ENCODE measurements at regions of chr4 and their contacts with region 1.

Region 1: DNA sequence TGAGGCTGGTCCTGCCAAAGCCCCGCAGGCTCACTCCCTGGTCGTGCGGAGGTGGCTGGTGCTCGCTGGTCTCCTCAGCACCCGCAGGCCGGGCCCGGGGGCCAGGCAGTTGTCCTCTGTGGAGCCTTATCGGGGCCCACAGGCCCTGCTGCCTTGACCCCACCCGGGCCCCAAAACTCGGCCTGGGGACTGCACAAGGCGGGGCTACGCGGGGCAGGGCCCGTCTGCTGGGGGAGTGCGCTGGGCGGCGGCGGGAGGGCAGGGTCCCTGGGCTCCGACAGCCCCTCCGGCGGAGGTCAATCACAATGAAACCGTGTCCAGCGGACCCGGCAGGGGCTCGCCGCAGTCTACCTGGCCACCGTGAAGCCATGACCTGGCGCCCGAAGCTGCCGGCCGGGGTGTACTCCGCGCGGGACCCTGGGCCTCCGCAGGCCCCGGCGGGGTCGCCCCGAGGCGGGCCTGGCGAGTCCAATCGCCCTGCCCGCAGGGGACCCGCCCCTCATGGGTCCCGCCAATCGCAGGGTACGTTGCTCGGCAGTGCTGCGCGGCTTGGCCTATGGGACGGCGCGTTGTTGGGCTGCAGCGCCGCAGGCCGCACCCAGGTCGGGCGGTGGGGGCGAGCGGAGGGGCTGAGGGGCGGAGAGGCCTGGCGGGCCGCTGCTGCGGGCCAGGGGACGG is at the start of gene ADD1:
- DNase-seq: peak; percentile 76 to 98
- H3K4me3 ChIP-seq: peak within 1 kb of the TSS; percentile 87
- H3K27ac ChIP-seq: no peak within 1 kb of the TSS
- H3K4me1 ChIP-seq: peaks cover 9% of the 10 kb centered on the region; the same call in 1 of the 2 replicates
- H3K27me3 ChIP-seq: no peaks in the 10 kb centered on the region
- CTCF ChIP-seq: no peak
- total RNA-seq, gene ADD1: 178 and 181 TPM in 2 replicates

Region 2: GRCh38 chr4:2761035-2761923 is 82.1 kb before region 1 on chr4:
- CTCF ChIA-PET with region 1: no interaction called
- POLR2A ChIA-PET with region 1: no interaction called
- intact Hi-C with region 1: loop called (anchors 5 kb)
- DNase-seq: peak in 1 of 2 experiments; percentile 57
- H3K4me3 ChIP-seq: no peak overlapping the region
- H3K27ac ChIP-seq: no peak overlapping the region
- H3K4me1 ChIP-seq: no peaks in the 10 kb centered on the region
- H3K27me3 ChIP-seq: no peaks in the 10 kb centered on the region
- CTCF ChIP-seq: no peak

Region 3: DNA sequence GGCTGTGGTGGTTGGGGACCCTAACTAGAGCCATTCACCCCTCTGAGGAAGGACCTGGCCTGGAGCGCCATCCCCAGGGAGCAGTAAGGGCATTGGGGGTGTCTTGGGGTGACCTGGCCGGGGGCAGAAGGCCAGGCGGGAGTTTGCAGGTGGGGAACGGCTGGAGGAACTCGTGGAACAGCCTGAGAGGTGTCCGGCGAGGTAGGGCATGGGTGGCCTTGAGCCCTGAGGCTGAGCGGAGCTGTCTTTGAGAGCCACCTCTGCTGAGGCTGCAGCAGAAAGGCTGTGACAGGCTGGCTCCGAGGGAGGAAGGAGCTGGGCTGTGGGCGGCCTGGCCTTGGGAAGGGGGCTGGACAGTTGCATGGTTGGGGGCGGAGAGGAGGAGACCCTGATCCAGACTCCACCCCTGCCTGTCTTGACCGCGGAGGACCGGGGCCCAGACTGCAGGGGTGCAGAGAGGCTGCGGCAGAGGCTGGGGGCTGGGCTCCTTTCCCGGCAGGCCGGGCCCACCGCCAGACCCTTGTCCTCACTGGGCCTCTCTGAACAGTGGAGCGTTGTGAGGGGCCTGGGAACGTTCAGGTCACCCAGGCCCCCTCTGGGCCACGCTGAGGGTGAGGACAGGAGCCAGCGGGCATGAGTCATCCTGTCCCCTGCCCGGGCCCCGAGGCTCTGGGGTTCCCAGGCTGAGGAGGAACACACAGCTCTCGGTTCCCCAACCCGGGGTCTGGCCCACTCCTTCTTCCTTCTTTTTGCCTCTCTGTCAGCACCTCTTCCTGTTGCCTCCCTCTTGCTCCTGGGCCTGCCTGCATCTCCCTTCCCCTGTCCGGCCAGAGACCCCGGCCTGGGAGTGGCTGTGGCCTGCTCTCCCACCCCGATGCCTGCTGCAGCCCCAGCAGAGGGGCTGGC is 42.5 kb before region 1 on chr4:
- CTCF ChIA-PET with region 1: interaction called, 13 read pairs
- POLR2A ChIA-PET with region 1: no interaction called
- intact Hi-C with region 1: no loop called
- DNase-seq: peak; percentile 51 to 73
- H3K4me3 ChIP-seq: no peak overlapping the region
- H3K27ac ChIP-seq: peak overlapping the region; percentile 51; the same call in 1 of the 2 replicates
- H3K4me1 ChIP-seq: peaks cover 77% of the 10 kb centered on the region
- H3K27me3 ChIP-seq: no peaks in the 10 kb centered on the region
- CTCF ChIP-seq: no peak

Measured in PC-9 (cell line).